Posterior cingulate gyrus (tissue), 11 donors: ENCODE measurements at regions of chr5 and their contacts with region 1.

Region 1: GRCh38 chr5:172697123-172698121 is 56.4 kb downstream of the NEURL1B start:
- DNase-seq: peak; percentile 60 to 97 (median 83)

Region 2: GRCh38 chr5:172106511-172107356 is 590.7 kb before region 1 on chr5:
- intact Hi-C with region 1: loop called (anchors 5 kb)
- DNase-seq: peak in 9 of 10 donors; percentile 56 to 94 (median 75)

Region 3: DNA sequence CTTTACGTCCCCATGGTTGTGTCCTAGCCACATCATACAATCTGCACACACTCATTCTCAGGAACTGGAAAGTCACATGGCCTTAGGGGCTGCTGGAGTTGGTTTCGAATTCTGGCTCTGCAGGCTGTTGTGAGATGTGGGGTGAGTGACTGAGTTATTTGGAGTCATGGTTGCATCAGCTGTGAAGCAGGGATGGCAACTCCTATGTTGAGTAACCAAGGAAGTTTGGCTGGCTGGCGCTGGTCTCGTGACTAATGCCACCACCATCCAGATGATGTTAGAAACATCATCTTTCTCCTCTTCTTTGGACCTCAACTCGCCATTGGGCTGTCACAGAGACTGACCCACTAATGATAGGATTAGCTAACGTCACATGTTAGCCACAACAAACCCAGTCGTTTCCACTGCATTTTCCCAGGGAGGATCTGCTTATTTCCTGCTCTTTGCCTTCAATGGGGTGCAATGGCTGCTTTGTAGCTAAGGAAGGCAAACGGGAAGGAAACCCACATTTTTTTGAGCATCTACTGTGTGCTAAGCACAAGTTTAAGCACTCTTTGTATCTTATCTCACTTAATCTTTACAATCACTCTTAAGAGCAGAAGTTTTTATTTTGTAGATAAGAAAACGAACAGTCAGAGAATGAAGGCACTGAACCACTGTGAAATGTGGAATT is 335.7 kb before region 1 on chr5:
- intact Hi-C with region 1: loop called (anchors 10 kb)
- DNase-seq: peak in 1 of 10 donors; percentile 37

Region 4: DNA sequence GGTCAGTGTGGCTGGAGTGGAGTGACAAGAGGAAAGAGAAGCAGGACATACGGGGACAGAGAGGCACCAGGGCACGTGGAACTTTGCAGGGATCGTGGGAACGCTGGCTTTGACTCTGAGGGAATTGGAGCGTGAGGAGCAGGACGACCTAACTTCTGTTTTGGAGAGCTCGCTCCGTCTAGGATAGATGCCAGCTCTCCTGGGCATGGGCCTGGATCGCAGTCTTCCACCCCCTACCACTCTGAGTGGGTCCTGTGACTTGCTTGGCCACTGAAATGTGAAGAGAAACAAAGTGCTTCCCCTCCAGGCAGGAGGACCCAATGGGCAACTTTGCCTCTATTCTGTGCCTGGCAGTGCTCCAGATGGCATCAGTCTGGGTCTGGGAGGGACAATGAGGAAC is 234.4 kb before region 1 on chr5:
- intact Hi-C with region 1: loop called (anchors 5 kb)
- DNase-seq: peak in 4 of 10 donors; percentile 42 to 85 (median 64)

Region 5: DNA sequence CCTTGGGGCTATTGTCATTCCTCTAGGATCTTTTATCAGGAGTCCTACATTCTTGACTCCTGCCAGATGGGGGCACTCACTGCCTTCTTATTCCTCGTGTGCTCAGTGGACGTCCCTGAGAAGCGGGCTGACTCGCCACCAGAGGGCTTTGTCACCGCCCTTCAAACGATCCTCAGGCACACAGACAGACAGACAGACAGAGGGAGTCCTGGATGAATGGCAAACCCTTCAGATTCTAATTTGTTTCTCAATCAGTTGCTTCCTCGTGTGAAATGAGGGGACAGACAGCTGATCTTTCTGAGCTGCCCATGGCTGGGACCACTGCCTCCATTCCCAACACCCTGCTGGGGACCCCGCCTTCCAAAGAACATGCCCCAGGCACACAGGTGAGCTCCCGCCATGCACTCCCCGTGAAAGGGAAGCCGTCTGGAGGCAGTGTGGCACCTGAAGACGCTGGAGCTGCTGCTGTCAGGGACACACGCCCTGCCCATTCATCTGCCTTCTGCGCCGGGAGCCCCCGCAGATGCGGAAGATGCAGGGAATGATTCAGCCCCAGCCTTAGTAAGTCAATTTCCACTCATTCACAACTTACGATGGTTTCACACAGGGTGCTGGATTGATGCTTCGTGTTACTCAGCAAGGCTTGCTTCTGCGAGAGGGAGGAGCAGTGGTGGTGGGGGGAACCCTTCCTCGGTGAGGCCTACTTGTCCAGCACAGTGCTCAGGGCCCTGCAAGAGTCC is 218.2 kb before region 1 on chr5:
- intact Hi-C with region 1: loop called (anchors 1 kb)
- DNase-seq: peak; percentile 58 to 97 (median 82)

Region 6: DNA sequence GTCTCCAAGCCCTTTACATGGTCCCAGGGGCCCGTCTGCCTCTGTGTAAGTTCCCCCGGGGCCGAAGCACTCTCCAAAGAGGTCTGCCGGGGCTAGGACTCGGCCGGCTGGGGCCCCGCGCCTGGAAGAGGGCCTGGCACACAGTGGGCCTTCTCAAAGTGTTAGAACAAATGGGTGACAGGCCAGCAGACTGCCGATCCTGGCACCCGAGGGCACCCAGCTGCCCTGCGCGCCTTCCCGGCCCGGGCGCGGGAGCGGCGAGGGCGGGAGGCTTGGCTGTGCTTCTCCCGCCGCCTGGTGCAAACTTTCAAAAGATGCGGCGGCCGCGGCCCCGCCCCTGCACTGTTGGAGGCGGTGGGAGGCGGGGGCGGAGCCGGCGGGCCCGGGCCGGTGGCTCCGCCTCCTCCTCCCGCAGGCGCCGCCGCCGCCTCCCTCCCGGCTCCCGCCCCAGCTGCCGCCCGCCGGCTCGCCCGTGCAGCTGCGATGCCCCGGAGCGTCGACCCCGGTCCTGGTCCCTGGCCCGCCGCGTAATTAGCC is 56.5 kb before region 1 on chr5 and contains the start of gene NEURL1B:
- intact Hi-C with region 1: loop called (anchors 10 kb)
- DNase-seq: peak; percentile 56 to 97 (median 68)